ENCODE measurements at regions of chr3 and their contacts with region 1.

Region 1: DNA sequence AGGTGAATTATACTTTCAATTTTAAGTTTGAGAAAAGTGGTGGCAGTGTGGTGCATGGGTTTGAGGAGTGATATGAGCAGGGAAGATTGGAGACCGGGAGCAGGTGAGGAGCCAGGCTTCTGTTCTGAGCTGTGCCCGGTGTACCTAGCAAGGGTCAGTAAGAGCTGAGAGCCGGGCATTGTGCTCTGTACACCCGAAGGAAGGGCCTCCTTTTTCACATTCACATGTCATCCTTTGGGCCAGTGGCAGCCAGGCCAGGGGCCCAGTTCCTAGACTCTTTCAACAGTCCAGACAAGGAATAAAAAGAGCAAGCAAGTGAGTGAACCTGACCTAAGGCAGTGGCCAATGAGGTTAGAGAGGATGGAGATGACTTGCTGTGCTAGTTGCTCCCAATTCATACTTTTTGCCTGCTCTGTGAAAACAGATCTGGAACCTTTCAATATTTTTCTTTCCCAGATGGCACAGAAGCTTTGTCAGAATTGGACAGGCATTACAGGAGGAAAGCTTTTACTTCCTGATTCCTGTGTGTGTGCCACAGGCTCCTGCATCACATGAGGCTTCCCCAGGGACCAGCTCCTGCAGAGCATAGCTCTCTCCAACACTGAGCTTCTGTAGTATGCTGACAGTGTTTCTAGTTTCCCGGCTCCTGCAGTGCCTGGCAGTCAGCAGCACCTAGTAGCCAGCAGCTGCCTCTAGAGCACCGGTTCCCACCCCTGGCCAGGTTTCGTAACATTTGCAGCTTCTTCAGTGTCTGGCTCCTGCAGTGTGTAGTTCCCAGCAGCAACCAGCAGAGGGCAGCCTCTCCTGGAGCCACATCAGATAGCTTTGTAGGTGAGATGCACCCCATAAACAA is 5.3 kb upstream of the TRA2B start:
- DNase-seq: peak; percentile 90
- ATAC-seq: peak; percentile 98
- H3K4me3 ChIP-seq: peak overlapping the region in 4 of 5 experiments; percentile 13 to 35 (median 21)
- H3K4me3 Mint-ChIP-seq: peak overlapping the region; percentile 70
- H3K27ac ChIP-seq: no peak overlapping the region
- H3K27ac Mint-ChIP-seq: peak overlapping the region; percentile 70
- H3K4me1 ChIP-seq: peaks cover 6 to 14% of the 10 kb centered on the region in 2 donors
- H3K4me1 Mint-ChIP-seq: peaks cover 14% of the 10 kb centered on the region
- H3K27me3 ChIP-seq: peaks cover 0 to 4% (median 2%) of the 10 kb centered on the region in 4 experiments
- H3K27me3 Mint-ChIP-seq: peaks cover 7% of the 10 kb centered on the region
- CTCF ChIP-seq: peak; percentile 98

Region 2: GRCh38 chr3:185479373-185479945 is 463.7 kb before region 1 on chr3:
- CTCF ChIA-PET with region 1: no interaction called
- POLR2A ChIA-PET with region 1: no interaction called
- intact Hi-C with region 1: no loop called
- DNase-seq: no peak
- ATAC-seq: no peak
- H3K4me3 ChIP-seq: no peak overlapping the region
- H3K4me3 Mint-ChIP-seq: no peak overlapping the region
- H3K27ac ChIP-seq: no peak overlapping the region
- H3K27ac Mint-ChIP-seq: no peak overlapping the region
- H3K4me1 ChIP-seq: no peaks in the 10 kb centered on the region
- H3K4me1 Mint-ChIP-seq: peaks cover 3% of the 10 kb centered on the region
- H3K27me3 ChIP-seq: no peaks in the 10 kb centered on the region
- H3K27me3 Mint-ChIP-seq: no peaks in the 10 kb centered on the region
- CTCF ChIP-seq: no peak

Region 3: GRCh38 chr3:185923237-185923636 is 19.9 kb before region 1 on chr3:
- CTCF ChIA-PET with region 1: interaction called, 40 read pairs
- POLR2A ChIA-PET with region 1: interaction called, 7 read pairs
- intact Hi-C with region 1: no loop called
- DNase-seq: no peak
- ATAC-seq: no peak
- H3K4me3 ChIP-seq: no peak overlapping the region
- H3K4me3 Mint-ChIP-seq: no peak overlapping the region
- H3K27ac ChIP-seq: no peak overlapping the region
- H3K27ac Mint-ChIP-seq: no peak overlapping the region
- H3K4me1 ChIP-seq: peaks cover 17 to 18% of the 10 kb centered on the region in 2 donors
- H3K4me1 Mint-ChIP-seq: peaks cover 34% of the 10 kb centered on the region
- H3K27me3 ChIP-seq: no peaks in the 10 kb centered on the region
- H3K27me3 Mint-ChIP-seq: no peaks in the 10 kb centered on the region
- CTCF ChIP-seq: no peak

Region 4: DNA sequence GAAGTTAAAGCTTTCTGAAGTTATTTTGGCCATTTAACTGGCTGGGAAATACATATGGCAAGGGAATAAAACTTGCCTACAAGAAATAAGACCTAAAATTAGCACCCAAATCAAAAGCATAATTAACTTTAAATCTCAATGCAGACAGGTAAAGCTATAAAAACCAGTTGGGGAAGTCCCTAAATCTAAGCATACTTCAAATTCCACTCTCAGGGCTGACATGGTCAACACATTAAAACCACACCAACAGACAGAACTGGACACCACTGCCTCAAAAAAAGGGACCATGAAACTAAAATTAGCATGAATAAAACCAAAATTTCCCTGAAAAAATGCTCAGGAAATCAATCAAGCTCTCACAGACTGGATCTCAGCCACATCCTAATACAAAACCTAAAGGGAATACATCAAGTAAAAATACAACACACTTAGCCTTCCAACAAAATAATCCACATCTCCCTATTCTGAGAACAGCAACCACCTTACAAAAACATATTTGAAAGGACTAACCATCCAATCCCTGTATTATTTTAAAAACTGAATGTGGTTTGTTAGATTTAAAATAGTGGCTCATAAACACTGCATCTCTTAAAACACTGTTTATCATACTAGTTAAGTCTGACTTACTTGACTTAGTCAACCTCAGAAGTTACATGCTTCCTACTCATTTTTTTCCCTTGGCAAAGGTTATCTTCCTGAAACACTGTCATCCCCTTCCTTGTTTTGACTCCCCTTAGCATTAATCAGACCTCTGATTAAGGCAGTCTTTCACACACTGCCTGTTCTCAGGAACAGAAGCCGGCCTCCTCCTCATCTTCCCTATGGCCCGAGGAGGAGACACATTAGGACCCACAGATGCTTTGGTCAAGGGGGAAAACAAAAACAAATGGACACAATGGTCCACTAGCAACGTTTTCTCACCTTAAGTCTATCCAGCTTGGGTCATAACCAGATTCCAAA is 13.7 kb before region 1 on chr3:
- CTCF ChIA-PET with region 1: interaction called, 40 read pairs
- POLR2A ChIA-PET with region 1: interaction called, 7 read pairs
- intact Hi-C with region 1: no loop called
- DNase-seq: no peak
- ATAC-seq: no peak
- H3K4me3 ChIP-seq: peak overlapping the region in 3 of 5 experiments; percentile 3 to 53 (median 16)
- H3K4me3 Mint-ChIP-seq: peak overlapping the region; percentile 72
- H3K27ac ChIP-seq: peak overlapping the region; percentile 49 to 66
- H3K27ac Mint-ChIP-seq: peak overlapping the region; percentile 84
- H3K4me1 ChIP-seq: peaks cover 67 to 78% of the 10 kb centered on the region in 2 donors
- H3K4me1 Mint-ChIP-seq: peaks cover 89% of the 10 kb centered on the region
- H3K27me3 ChIP-seq: no peaks in the 10 kb centered on the region
- H3K27me3 Mint-ChIP-seq: no peaks in the 10 kb centered on the region
- CTCF ChIP-seq: no peak

Region 5: GRCh38 chr3:185961675-185962232 is 18.6 kb after region 1 on chr3:
- CTCF ChIA-PET with region 1: interaction called, 51 read pairs
- POLR2A ChIA-PET with region 1: no interaction called
- intact Hi-C with region 1: no loop called
- DNase-seq: no peak
- ATAC-seq: no peak
- H3K4me3 ChIP-seq: no peak overlapping the region
- H3K4me3 Mint-ChIP-seq: no peak overlapping the region
- H3K27ac ChIP-seq: no peak overlapping the region
- H3K27ac Mint-ChIP-seq: no peak overlapping the region
- H3K4me1 ChIP-seq: no peaks in the 10 kb centered on the region
- H3K4me1 Mint-ChIP-seq: no peaks in the 10 kb centered on the region
- H3K27me3 ChIP-seq: peaks cover 0 to 8% (median 4%) of the 10 kb centered on the region in 4 experiments
- H3K27me3 Mint-ChIP-seq: peaks cover 20% of the 10 kb centered on the region
- CTCF ChIP-seq: no peak

Region 6: GRCh38 chr3:185976977-185977678 is 34.0 kb after region 1 on chr3:
- CTCF ChIA-PET with region 1: interaction called, 24 read pairs
- POLR2A ChIA-PET with region 1: interaction called, 5 read pairs
- intact Hi-C with region 1: no loop called
- DNase-seq: peak; percentile 84
- ATAC-seq: peak; percentile 88
- H3K4me3 ChIP-seq: no peak overlapping the region
- H3K4me3 Mint-ChIP-seq: no peak overlapping the region
- H3K27ac ChIP-seq: no peak overlapping the region
- H3K27ac Mint-ChIP-seq: peak overlapping the region; percentile 11
- H3K4me1 ChIP-seq: peaks cover 0 to 2% of the 10 kb centered on the region in 2 donors
- H3K4me1 Mint-ChIP-seq: peaks cover 7% of the 10 kb centered on the region
- H3K27me3 ChIP-seq: no peaks in the 10 kb centered on the region
- H3K27me3 Mint-ChIP-seq: no peaks in the 10 kb centered on the region
- CTCF ChIP-seq: peak; percentile 93

Region 7: GRCh38 chr3:185983495-185984141 is 40.5 kb after region 1 on chr3:
- CTCF ChIA-PET with region 1: interaction called, 24 read pairs
- POLR2A ChIA-PET with region 1: interaction called, 5 read pairs
- intact Hi-C with region 1: no loop called
- DNase-seq: peak; percentile 77
- ATAC-seq: peak; percentile 84
- H3K4me3 ChIP-seq: no peak overlapping the region
- H3K4me3 Mint-ChIP-seq: no peak overlapping the region
- H3K27ac ChIP-seq: no peak overlapping the region
- H3K27ac Mint-ChIP-seq: no peak overlapping the region
- H3K4me1 ChIP-seq: peaks cover 6 to 8% of the 10 kb centered on the region in 2 donors
- H3K4me1 Mint-ChIP-seq: no peaks in the 10 kb centered on the region
- H3K27me3 ChIP-seq: peaks cover 0 to 16% (median 2%) of the 10 kb centered on the region in 4 experiments
- H3K27me3 Mint-ChIP-seq: peaks cover 10% of the 10 kb centered on the region
- CTCF ChIP-seq: peak; percentile 94

Measured in B cell (primary cell).